ENCODE measurements at regions of chr12 and their contacts with region 1.

Region 1: GRCh38 chr12:57583008-57583831 is 7.8 kb upstream of the PIP4K2C start:
- DNase-seq: peak; percentile 90 to 96
- ATAC-seq: peak; percentile 91 to 98
- H3K4me3 ChIP-seq: no peak overlapping the region
- H3K27ac ChIP-seq: no peak overlapping the region
- H3K4me1 ChIP-seq: peaks cover 13% of the 10 kb centered on the region
- CTCF ChIP-seq: peak; percentile 96
- EP300 ChIP-seq: no peak
- POLR2A ChIP-seq: no peak
- RAD21 ChIP-seq: peak; percentile 86 to 93

Region 2: GRCh38 chr12:57517187-57517586 is 66.0 kb before region 1 on chr12:
- CTCF ChIA-PET with region 1: no interaction called
- POLR2A ChIA-PET with region 1: no interaction called
- DNase-seq: peak in 1 of 2 experiments; percentile 51
- ATAC-seq: no peak
- H3K4me3 ChIP-seq: no peak overlapping the region
- H3K27ac ChIP-seq: peak overlapping the region in 1 of 2 experiments; percentile 49; a peak in 3 of 6 replicates
- H3K4me1 ChIP-seq: peaks cover 41% of the 10 kb centered on the region
- CTCF ChIP-seq: no peak
- EP300 ChIP-seq: no peak
- POLR2A ChIP-seq: no peak
- RAD21 ChIP-seq: no peak

Region 3: GRCh38 chr12:57541001-57541400 is 42.2 kb before region 1 on chr12:
- CTCF ChIA-PET with region 1: interaction called, 33 read pairs
- POLR2A ChIA-PET with region 1: no interaction called
- DNase-seq: no peak
- ATAC-seq: no peak
- H3K4me3 ChIP-seq: no peak overlapping the region
- H3K27ac ChIP-seq: no peak overlapping the region
- H3K4me1 ChIP-seq: peaks cover 17% of the 10 kb centered on the region
- CTCF ChIP-seq: no peak
- EP300 ChIP-seq: no peak
- POLR2A ChIP-seq: no peak
- RAD21 ChIP-seq: no peak

Region 4: GRCh38 chr12:57563358-57563757 is 19.9 kb before region 1 on chr12:
- CTCF ChIA-PET with region 1: interaction called, 104 read pairs
- POLR2A ChIA-PET with region 1: no interaction called
- DNase-seq: no peak
- ATAC-seq: no peak
- H3K4me3 ChIP-seq: no peak overlapping the region
- H3K27ac ChIP-seq: no peak overlapping the region
- H3K4me1 ChIP-seq: peaks cover 6% of the 10 kb centered on the region; the same call in 1 of the 3 replicates
- CTCF ChIP-seq: no peak
- EP300 ChIP-seq: no peak
- POLR2A ChIP-seq: no peak
- RAD21 ChIP-seq: no peak

Region 5: GRCh38 chr12:57627501-57628279 is 44.5 kb after region 1 on chr12:
- CTCF ChIA-PET with region 1: interaction called, 336 read pairs
- POLR2A ChIA-PET with region 1: no interaction called
- DNase-seq: no peak
- ATAC-seq: no peak
- H3K4me3 ChIP-seq: no peak overlapping the region
- H3K27ac ChIP-seq: no peak overlapping the region
- H3K4me1 ChIP-seq: peaks cover 5% of the 10 kb centered on the region; the same call in 2 of the 3 replicates
- CTCF ChIP-seq: no peak
- EP300 ChIP-seq: no peak
- POLR2A ChIP-seq: no peak
- RAD21 ChIP-seq: no peak

Region 6: DNA sequence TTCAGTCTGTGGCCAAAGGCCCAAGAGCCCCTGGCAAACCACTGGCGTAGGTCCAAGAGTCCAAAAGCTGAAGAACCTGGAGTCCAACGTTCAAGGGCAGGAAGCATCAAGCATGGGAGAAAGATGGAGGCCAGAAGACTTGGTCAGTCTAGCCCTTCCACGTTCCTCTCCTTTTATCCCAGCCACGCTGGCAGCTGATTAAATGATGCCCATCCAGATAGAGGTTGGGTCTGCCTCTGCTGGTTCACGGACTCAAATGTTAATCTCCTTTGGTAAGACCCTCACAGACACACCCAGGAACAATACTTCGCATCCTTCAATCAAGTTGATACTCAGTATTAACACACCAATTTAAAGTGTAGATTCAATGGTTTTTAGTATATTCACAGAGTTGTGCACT is 89.6 kb after region 1 on chr12:
- CTCF ChIA-PET with region 1: interaction called, 10 read pairs
- POLR2A ChIA-PET with region 1: no interaction called
- DNase-seq: no peak
- ATAC-seq: no peak
- H3K4me3 ChIP-seq: no peak overlapping the region
- H3K27ac ChIP-seq: no peak overlapping the region
- H3K4me1 ChIP-seq: no peaks in the 10 kb centered on the region
- CTCF ChIP-seq: no peak
- EP300 ChIP-seq: no peak
- POLR2A ChIP-seq: no peak
- RAD21 ChIP-seq: no peak

Region 7: GRCh38 chr12:57735952-57736740 is 152.9 kb after region 1 on chr12:
- CTCF ChIA-PET with region 1: interaction called, 91 read pairs
- POLR2A ChIA-PET with region 1: no interaction called
- DNase-seq: peak in 1 of 2 experiments; percentile 67
- ATAC-seq: peak; percentile 61 to 83
- H3K4me3 ChIP-seq: peak overlapping the region; percentile 60
- H3K27ac ChIP-seq: peak overlapping the region; percentile 39 to 74; a peak in 5 of 6 replicates
- H3K4me1 ChIP-seq: peaks cover 27% of the 10 kb centered on the region
- CTCF ChIP-seq: peak; percentile 46
- EP300 ChIP-seq: no peak
- POLR2A ChIP-seq: no peak
- RAD21 ChIP-seq: peak; percentile 54 to 60; a peak in 4 of 5 replicates